GM10248 (cell line): ENCODE measurements at regions of chr7 and their contacts with region 1.

Region 1: GRCh38 chr7:108253275-108254044 is 123.3 kb upstream of the LAMB4 start:
- DNase-seq: no peak
- CTCF ChIP-seq: no peak

Region 2: DNA sequence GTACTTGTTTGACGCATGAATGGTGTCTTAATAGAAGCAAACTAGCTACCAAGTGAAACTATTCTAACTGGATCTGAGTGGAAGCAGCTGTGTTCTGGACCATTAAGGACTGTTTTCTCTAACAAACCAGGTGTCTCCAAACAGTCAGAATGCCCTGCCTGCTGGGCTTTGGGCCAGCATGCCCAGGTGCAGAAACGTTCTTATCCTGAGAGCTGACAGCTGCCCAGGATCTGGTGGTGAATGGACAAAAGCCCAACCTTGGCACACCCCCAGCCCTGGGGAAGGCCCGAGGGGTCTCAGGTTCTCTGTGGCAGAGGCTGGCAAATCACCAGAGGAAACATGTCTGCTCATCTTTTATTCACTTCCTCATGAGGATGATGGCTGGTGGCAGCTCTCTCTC is 75.1 kb before region 1 on chr7:
- CTCF ChIA-PET with region 1: no interaction called
- POLR2A ChIA-PET with region 1: no interaction called
- DNase-seq: no peak
- CTCF ChIP-seq: no peak

Region 3: GRCh38 chr7:108235451-108236061 is 17.9 kb before region 1 on chr7:
- CTCF ChIA-PET with region 1: interaction called, 11 read pairs
- POLR2A ChIA-PET with region 1: interaction called, 4 read pairs
- DNase-seq: no peak
- CTCF ChIP-seq: no peak

Region 4: GRCh38 chr7:108266491-108266890 is 13.0 kb after region 1 on chr7:
- CTCF ChIA-PET with region 1: interaction called, 12 read pairs
- POLR2A ChIA-PET with region 1: no interaction called
- DNase-seq: no peak
- CTCF ChIP-seq: no peak